ENCODE measurements at regions of chr2 and their contacts with region 1.

Region 1: DNA sequence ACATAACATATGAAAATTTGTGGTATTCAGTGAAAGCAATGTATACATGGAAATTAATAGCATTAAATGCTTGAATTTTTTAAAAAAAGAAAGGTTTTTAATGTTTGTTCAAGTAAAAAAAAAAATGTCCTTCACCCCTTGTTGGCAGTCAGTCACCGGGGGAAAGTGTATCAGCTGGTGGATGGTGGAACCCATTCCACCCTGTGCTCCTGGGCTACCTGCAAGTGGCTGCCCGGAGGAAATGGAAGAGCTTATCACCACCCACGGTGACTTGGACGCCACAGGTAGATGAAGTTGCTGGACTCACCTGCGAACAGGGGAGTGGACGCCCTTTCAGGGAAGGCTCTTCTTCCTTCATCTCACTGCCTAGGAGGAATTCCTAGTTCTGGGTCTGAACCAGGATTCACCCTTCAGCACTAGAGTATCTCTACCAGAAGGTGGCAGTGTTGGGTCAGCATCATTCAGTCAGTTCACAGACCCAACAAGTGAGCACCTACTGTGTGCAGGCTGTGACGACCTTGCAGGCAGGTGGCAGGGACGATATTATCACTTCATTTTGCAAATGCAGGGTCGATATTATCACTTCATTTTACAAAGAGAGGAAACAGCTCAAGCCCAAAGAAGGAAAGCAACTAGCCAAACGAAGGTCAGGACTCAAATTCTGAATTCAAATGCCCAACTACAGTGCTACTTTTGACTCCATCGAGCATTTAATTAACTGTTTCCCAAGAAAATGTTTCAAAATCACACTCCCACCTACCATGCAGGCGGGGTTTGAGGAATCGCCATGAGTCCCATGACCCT is 35.8 kb downstream of the CIB4 start:
- DNase-seq: peak; percentile 48
- ATAC-seq: peak; percentile 72
- H3K4me3 ChIP-seq: no peak overlapping the region
- H3K27ac ChIP-seq: no peak overlapping the region
- H3K4me1 ChIP-seq: no peaks in the 10 kb centered on the region
- H3K27me3 ChIP-seq: peaks cover 41% of the 10 kb centered on the region
- CTCF ChIP-seq: peak; percentile 75
- POLR2A ChIP-seq: no peak
- RAD21 ChIP-seq: peak; percentile 84

Region 2: GRCh38 chr2:26942543-26943295 is 337.3 kb after region 1 on chr2:
- CTCF ChIA-PET with region 1: no interaction called
- POLR2A ChIA-PET with region 1: no interaction called
- dilution Hi-C with region 1: no loop called
- in situ Hi-C with region 1: no loop called
- intact Hi-C with region 1: loop called (anchors 10 kb)
- DNase-seq: peak; percentile 48
- ATAC-seq: peak; percentile 63
- H3K4me3 ChIP-seq: no peak overlapping the region
- H3K27ac ChIP-seq: no peak overlapping the region
- H3K4me1 ChIP-seq: peaks cover 2% of the 10 kb centered on the region; the same call in 1 of the 2 replicates
- H3K27me3 ChIP-seq: peaks cover 46% of the 10 kb centered on the region
- CTCF ChIP-seq: peak; percentile 75
- POLR2A ChIP-seq: no peak
- RAD21 ChIP-seq: peak; percentile 72

Region 3: GRCh38 chr2:27771548-27772335 is 1166.3 kb after region 1 on chr2 and contains the start of gene MRPL33:
- CTCF ChIA-PET with region 1: no interaction called
- POLR2A ChIA-PET with region 1: no interaction called
- dilution Hi-C with region 1: no loop called
- in situ Hi-C with region 1: no loop called
- intact Hi-C with region 1: no loop called
- DNase-seq: peak; percentile 85
- ATAC-seq: peak; percentile 97
- H3K4me3 ChIP-seq: peak within 1 kb of the TSS; percentile 73
- H3K27ac ChIP-seq: peak within 1 kb of the TSS; percentile 88
- H3K4me1 ChIP-seq: peaks cover 12% of the 10 kb centered on the region
- H3K27me3 ChIP-seq: no peaks in the 10 kb centered on the region
- CTCF ChIP-seq: no peak
- POLR2A ChIP-seq: peak; percentile 70
- RAD21 ChIP-seq: no peak
- total RNA-seq, gene MRPL33: 13.3 and 48.6 TPM in 2 replicates

Measured in IMR-90 (cell line).